Dendritic cell treated with granulocyte-macrophage colony-stimulating factor and Interleukin-4, amounts not matched to agents 40 ng/mL and 50 ng/mL, for 4 days (primary cell): ENCODE measurements at regions of chr16 and their contacts with region 1.

Region 1: GRCh38 chr16:70470927-70471341 is 16.5 kb downstream of the FCSK start:
- H3K4me3 Mint-ChIP-seq: no peak overlapping the region
- H3K27ac Mint-ChIP-seq: no peak overlapping the region
- H3K4me1 Mint-ChIP-seq: peaks cover 15% of the 10 kb centered on the region
- H3K27me3 Mint-ChIP-seq: no peaks in the 10 kb centered on the region

Region 2: DNA sequence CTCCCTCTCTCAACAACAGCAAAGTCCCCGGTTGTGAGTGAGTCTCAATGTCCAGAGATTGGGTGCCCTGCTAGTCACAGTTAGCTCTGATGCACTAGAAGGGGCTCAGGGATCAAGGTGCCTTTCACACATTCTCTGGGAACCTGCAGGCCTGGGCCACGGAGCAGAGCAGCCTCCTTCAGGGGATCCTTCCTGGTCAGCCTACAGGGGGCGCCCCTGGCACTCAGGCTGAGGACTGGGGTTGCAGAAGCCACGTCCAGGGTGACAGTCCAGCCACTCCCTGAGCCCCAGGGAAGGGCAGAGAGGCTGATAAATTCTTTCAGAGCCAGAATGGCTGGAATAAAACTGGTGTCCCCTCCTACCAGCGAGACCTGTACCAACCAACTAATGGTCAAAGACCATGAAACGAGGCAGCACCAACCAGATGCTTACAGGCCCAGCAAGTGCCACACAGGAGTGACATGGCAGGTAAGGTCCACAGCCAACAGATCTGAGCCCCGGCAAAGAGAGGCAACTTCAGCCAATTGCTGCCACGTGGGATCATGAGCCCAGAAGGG is 75.5 kb before region 1 on chr16:
- intact Hi-C with region 1: loop called (anchors 1 kb)
- H3K4me3 Mint-ChIP-seq: no peak overlapping the region
- H3K27ac Mint-ChIP-seq: no peak overlapping the region
- H3K4me1 Mint-ChIP-seq: peaks cover 9% of the 10 kb centered on the region
- H3K27me3 Mint-ChIP-seq: no peaks in the 10 kb centered on the region